ENCODE measurements at regions of chr17 and their contacts with region 1.

Region 1: DNA sequence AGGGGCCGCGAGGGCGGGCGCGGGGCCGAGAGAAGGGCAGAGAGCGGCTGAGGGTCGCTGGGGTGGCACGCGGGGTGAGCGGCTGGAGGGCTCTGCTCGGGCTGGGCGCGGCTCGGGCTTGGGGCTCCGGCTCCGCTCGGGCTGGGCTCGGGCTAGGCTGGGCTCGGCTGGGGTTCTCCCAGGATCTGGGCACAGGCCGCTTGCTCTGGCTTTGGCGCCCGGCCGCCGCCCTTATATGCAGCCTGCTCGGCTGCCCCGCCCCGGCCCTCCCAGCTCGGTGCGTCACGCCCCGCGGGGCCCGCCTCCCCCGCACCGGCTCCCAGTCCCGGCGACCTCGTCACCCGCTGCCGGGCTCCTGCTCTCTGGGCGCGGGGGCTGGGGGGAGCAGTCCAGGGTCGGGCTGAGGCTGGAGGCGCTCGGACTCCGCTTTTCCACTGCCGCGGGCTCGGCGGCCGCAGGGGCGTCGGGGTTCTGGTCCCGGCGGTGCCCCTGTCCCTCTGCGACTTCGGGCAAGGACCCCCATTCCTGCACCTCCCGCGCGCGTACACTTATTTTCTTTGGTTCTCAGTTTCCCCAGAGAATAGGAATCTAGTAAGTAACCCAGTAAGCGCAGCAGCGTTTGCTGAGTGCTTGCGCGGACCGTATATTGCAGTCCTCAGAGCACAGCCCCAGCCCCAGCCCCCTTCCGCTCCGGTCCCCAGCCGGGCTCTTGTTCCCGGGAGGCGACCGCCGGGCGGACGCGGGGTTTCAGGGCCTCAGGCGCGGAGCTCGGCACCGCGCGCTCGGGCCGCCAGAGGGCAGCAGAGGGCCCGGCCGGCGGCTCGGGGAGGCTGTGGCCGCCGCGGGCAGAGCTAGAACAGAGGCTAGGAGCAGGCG is at the start of gene RASD1:
- DNase-seq: peak; percentile 82
- ATAC-seq: peak; percentile 75
- H3K4me3 Mint-ChIP-seq: peak within 1 kb of the TSS; percentile 81
- H3K27ac Mint-ChIP-seq: no peak within 1 kb of the TSS
- H3K4me1 Mint-ChIP-seq: peaks cover 41% of the 10 kb centered on the region
- H3K27me3 Mint-ChIP-seq: peaks cover 29% of the 10 kb centered on the region
- CTCF ChIP-seq: peak; percentile 95
- total RNA-seq, gene RASD1: 5.1 to 5.3 TPM (median 5.2 TPM) in 3 replicates

Region 2: GRCh38 chr17:17356149-17356930 is 140.1 kb before region 1 on chr17:
- CTCF ChIA-PET with region 1: interaction called, 71 read pairs
- POLR2A ChIA-PET with region 1: interaction called, 5 read pairs
- DNase-seq: peak; percentile 85
- ATAC-seq: peak; percentile 80
- H3K4me3 Mint-ChIP-seq: no peak overlapping the region
- H3K27ac Mint-ChIP-seq: no peak overlapping the region
- H3K4me1 Mint-ChIP-seq: peaks cover 3% of the 10 kb centered on the region; the same call in 1 of the 2 replicates
- H3K27me3 Mint-ChIP-seq: peaks cover 4% of the 10 kb centered on the region
- CTCF ChIP-seq: peak; percentile 99

Region 3: DNA sequence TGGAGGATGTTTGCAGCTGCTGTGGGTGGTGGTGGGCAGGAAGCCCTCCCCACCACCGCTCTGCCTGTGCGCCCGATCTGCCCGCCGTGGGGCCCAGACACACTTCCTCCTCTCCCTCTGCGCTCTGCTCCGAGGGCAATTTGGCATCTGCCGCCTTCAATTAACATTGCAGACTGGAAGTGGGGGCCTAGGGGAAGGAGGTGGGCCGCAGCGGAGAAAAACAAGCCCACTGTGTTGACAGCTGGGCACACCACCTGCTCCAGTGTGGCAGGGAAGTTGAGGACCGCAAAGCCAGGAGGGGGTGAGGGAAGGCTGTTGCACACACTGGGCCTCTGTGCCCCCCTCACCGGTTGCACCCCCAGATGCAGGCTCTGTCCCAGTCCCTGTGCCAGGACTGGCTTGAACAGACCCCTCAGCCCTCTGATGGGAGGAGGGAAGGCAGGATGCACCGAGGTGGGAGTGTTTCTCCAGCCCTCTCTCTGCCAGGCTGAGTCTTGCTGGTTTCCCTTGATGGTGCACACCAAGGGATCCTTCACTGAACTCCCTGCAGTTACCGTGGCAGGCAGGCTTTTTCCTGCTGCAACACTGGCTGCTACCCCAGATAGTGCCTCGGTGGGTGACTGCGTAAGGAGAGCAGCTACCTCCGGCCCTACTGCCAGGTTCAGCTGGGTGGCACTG is 92.4 kb before region 1 on chr17:
- CTCF ChIA-PET with region 1: no interaction called
- POLR2A ChIA-PET with region 1: no interaction called
- DNase-seq: no peak
- ATAC-seq: no peak
- H3K4me3 Mint-ChIP-seq: no peak overlapping the region
- H3K27ac Mint-ChIP-seq: no peak overlapping the region
- H3K4me1 Mint-ChIP-seq: peaks cover 16% of the 10 kb centered on the region
- H3K27me3 Mint-ChIP-seq: no peaks in the 10 kb centered on the region; the same call in 1 of the 2 replicates
- CTCF ChIP-seq: no peak

Region 4: DNA sequence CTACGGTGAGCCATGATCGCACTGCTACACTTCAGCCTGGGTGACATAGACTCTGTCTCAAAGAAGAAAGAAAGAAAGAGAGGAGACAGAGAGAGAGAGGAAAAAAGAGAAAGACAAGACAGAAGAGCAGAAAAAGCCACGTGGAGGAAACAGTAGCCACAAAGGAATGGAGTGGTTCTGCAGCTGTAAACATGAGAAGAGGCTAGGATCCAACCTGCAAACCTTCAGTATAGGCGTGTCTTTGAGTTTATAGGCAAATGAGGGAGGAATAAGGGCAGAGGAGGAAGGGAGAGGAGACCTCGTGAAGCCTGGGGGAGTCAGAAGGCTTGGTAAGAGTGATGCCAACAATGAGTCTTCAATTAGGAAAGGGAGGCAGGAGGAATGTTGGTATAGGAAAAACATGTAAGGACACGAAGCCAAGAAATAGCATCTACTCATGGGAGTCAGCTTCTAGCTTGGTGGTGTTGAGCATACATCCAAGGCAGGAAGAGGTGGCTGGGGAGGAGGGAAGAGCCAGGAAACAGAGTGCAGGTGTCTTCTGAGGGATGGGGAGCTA is 15.8 kb before region 1 on chr17:
- CTCF ChIA-PET with region 1: interaction called, 12 read pairs
- POLR2A ChIA-PET with region 1: interaction called, 3 read pairs
- DNase-seq: no peak
- ATAC-seq: no peak
- H3K4me3 Mint-ChIP-seq: no peak overlapping the region
- H3K27ac Mint-ChIP-seq: no peak overlapping the region; the same call in 1 of the 2 replicates
- H3K4me1 Mint-ChIP-seq: peaks cover 17% of the 10 kb centered on the region
- H3K27me3 Mint-ChIP-seq: no peaks in the 10 kb centered on the region
- CTCF ChIP-seq: no peak

Region 5: GRCh38 chr17:17523001-17523730 is 26.7 kb after region 1 on chr17:
- CTCF ChIA-PET with region 1: interaction called, 24 read pairs
- POLR2A ChIA-PET with region 1: interaction called, 3 read pairs
- DNase-seq: peak; percentile 36
- ATAC-seq: peak; percentile 58
- H3K4me3 Mint-ChIP-seq: no peak overlapping the region
- H3K27ac Mint-ChIP-seq: peak overlapping the region; percentile 89
- H3K4me1 Mint-ChIP-seq: peaks cover 27% of the 10 kb centered on the region
- H3K27me3 Mint-ChIP-seq: no peaks in the 10 kb centered on the region
- CTCF ChIP-seq: no peak

Region 6: DNA sequence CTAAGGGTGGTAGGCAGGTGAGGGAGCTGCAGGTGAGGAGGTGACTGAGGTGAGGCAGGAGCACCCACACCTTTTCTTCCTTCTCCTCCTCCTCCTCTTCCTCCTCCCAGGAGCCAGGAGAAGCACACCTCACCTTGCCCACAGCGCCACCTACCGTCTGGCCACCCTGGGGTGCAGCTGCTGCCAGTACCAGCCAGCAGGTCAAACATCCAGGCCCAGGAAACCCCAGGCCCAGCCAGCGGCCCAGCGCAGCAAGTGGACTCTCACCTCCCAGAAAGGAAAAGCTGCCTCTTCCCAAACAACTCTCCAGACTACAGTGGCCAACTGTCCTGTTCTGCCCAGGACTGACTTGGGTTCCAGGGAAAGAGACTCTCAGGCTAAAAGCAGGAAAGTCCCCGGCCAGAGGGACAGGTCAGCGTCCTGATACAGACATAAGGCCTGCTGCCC is 72.3 kb after region 1 on chr17:
- CTCF ChIA-PET with region 1: interaction called, 108 read pairs
- POLR2A ChIA-PET with region 1: interaction called, 5 read pairs
- DNase-seq: peak; percentile 94
- ATAC-seq: peak; percentile 70
- H3K4me3 Mint-ChIP-seq: no peak overlapping the region
- H3K27ac Mint-ChIP-seq: no peak overlapping the region
- H3K4me1 Mint-ChIP-seq: peaks cover 13% of the 10 kb centered on the region
- H3K27me3 Mint-ChIP-seq: no peaks in the 10 kb centered on the region
- CTCF ChIP-seq: peak; percentile 80

Region 7: DNA sequence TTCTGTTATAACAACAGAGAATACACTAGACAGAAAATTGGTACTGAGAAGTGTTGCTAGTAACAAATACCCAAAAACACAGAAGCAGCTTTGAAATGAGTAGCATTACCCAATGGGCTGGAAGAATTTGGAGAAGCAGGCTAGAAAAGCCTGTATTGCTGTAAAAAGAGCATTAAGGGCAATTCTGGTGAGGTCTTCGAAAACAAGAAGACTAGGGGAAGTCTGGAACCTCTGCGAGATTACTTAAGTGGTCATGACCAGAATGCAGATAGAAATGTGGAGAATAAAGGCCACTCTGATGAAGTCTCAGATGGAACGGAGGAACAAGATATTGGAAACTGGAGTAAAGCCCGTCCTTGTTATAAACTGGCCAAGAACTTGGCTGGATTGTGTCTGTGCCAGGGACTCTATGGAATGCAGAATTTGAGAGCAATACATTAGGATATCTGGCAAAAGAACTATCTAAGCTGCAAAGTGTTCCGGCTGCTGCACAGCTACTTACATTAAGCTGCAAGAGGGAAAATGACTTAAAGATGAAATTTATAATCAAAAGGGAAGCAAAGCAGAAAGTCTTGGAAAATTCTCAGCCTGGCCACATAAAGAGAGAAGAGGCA is 140.0 kb after region 1 on chr17:
- CTCF ChIA-PET with region 1: interaction called, 49 read pairs
- POLR2A ChIA-PET with region 1: no interaction called
- DNase-seq: no peak
- ATAC-seq: no peak
- H3K4me3 Mint-ChIP-seq: no peak overlapping the region
- H3K27ac Mint-ChIP-seq: no peak overlapping the region
- H3K4me1 Mint-ChIP-seq: peaks cover 4% of the 10 kb centered on the region
- H3K27me3 Mint-ChIP-seq: peaks cover 8% of the 10 kb centered on the region
- CTCF ChIP-seq: no peak